K562 (cell line): ENCODE measurements at regions of chr11 and their contacts with region 1.

Region 1: GRCh38 chr11:74474316-74474715 is 7.0 kb upstream of the KCNE3 start:
- DNase-seq: no peak
- ATAC-seq: no peak
- H3K4me3 ChIP-seq: no peak overlapping the region
- H3K27ac ChIP-seq: no peak overlapping the region
- H3K4me1 ChIP-seq: peaks cover 0 to 9% of the 10 kb centered on the region in 2 experiments; a peak in 1 of 5 replicates
- H3K27me3 ChIP-seq: no peaks in the 10 kb centered on the region; a peak in 1 of 5 replicates
- CTCF ChIP-seq: no peak
- EP300 ChIP-seq: no peak
- POLR2A ChIP-seq: no peak
- RAD21 ChIP-seq: no peak

Region 2: GRCh38 chr11:74487875-74488274 is 13.6 kb after region 1 on chr11:
- CTCF ChIA-PET with region 1: no interaction called
- POLR2A ChIA-PET with region 1: interaction called, 12 read pairs
- in situ Hi-C with region 1: no loop called
- intact Hi-C with region 1: no loop called
- DNase-seq: peak in 2 of 4 experiments; percentile 45 to 61
- ATAC-seq: peak; percentile 88
- H3K4me3 ChIP-seq: no peak overlapping the region
- H3K27ac ChIP-seq: no peak overlapping the region
- H3K4me1 ChIP-seq: peaks cover 7 to 10% of the 10 kb centered on the region in 2 experiments; a peak in 4 of 5 replicates
- H3K27me3 ChIP-seq: no peaks in the 10 kb centered on the region
- CTCF ChIP-seq: peak; percentile 55 to 64 (median 62)
- EP300 ChIP-seq: no peak
- POLR2A ChIP-seq: no peak
- RAD21 ChIP-seq: peak; percentile 23 to 55; a peak in 3 of 4 replicates

Region 3: DNA sequence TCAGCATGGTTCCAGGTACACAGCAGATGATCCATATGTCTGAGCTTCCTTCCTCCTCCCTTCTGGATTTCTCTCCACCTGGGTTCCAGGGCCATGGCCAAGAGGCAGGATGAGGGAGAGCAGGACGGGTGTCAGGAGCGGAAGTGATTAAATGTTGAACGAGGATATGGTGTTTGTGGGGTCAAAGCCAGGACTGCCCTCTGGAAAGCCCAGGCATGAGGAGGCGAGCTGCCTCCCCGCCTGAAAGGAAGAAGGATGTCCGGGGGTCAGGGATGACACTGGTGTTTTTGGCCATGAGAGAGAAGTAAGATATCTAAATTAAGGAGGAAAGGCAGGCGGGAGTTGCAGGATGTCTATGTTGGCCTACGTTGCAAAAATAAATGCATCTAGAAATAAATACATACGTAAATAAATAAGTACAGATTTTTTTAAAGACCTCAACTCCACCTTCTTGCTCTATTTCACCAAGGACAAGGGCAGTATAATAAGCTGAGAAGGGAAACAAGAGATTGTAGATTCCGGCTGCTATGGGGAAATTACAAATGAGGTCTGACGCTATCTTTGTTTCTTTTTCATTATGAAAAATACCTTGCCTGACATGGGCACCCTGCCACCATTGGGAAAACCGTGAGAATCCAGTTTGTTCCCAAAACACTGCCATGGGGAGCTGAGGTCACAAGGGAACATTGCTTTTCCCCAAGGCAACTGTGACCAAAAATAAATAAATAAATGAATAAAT is 46.8 kb after region 1 on chr11:
- CTCF ChIA-PET with region 1: no interaction called
- POLR2A ChIA-PET with region 1: no interaction called
- in situ Hi-C with region 1: no loop called
- intact Hi-C with region 1: no loop called
- DNase-seq: no peak
- ATAC-seq: no peak
- H3K4me3 ChIP-seq: no peak overlapping the region
- H3K27ac ChIP-seq: no peak overlapping the region
- H3K4me1 ChIP-seq: no peaks in the 10 kb centered on the region
- H3K27me3 ChIP-seq: peaks cover 0 to 2% of the 10 kb centered on the region in 2 experiments; a peak in 4 of 5 replicates
- CTCF ChIP-seq: no peak
- EP300 ChIP-seq: no peak
- POLR2A ChIP-seq: no peak
- RAD21 ChIP-seq: no peak